Activated CD4-positive, alpha-beta memory T cell treated with anti-CD3 and anti-CD28 coated beads for 36 hours (primary cell): ENCODE measurements at regions of chr14 and their contacts with region 1.

Region 1: DNA sequence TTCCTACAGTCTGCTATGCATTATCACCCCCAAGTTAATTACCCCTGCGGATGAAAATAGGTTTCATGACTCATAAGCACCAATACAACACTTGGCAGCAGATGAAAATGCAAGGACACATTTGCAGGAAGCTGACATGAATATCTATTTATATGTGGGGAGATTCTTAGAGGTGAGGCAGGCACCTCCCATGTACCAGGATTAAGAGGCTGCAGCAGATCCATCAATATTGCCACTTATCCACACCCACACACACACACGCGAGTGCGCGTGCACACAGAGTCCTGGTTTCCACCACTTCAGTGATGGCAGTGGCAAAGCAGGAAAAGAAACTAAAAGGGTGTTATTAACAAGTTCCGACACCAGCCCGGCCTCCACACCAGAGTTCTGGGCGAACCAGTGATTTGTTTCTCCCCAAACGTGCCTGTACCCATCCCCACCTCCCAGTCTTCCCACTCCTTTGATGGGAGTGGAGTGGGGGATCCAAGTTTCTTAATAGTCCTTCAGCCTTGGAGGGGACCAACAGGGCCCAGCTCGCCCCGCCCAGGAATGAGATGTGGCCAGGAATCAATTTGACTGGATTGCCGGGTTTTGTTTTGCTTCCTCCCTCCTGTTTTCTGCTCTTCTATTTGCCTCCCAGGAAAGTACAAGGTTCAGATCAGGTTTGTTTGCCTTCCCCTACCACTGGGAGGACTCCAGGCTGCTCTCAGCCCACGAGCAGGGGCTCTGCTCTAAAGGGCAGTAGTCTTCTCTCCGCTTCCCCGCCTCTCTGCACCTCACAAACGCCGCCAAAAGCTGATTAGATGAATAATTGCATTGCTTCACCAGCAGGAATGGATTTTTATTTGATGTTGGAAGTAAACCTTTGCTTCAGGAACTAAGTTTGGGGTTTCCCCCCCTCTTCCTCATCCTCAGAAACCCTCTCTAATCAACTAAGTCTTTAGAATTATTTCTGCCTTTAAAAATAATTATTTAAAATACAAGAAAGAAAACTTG is 5.2 kb downstream of the IRF2BPL start:
- DNase-seq: peak; percentile 79
- H3K4me3 Mint-ChIP-seq: peak overlapping the region; percentile 58
- H3K27ac Mint-ChIP-seq: peak overlapping the region; percentile 87
- H3K4me1 Mint-ChIP-seq: peaks cover 44% of the 10 kb centered on the region
- H3K27me3 Mint-ChIP-seq: no peaks in the 10 kb centered on the region

Region 2: GRCh38 chr14:76947078-76947837 is 76.0 kb before region 1 on chr14:
- CTCF ChIA-PET with region 1: interaction called, 13 read pairs
- POLR2A ChIA-PET with region 1: interaction called, 4 read pairs
- intact Hi-C with region 1: no loop called
- DNase-seq: peak; percentile 91
- H3K4me3 Mint-ChIP-seq: peak overlapping the region; percentile 29
- H3K27ac Mint-ChIP-seq: peak overlapping the region; percentile 23
- H3K4me1 Mint-ChIP-seq: peaks cover 43% of the 10 kb centered on the region
- H3K27me3 Mint-ChIP-seq: no peaks in the 10 kb centered on the region

Region 3: DNA sequence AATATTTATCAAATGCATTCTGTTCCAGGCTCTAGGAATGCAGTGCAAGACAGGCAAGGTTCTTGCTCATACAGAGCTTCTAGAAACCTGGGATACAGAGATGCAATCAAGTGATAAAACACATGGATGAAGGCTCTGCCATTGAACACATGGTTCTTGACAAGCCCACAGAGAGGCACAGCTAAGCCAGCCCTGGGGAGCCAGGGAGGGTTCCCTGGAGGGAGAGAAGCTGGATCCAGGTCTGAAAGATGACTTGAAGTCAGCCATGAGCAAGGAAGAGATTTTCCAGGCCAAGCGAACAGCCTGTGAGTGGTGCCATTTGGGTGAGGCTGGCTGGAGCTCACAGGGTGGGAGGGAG is 61.0 kb before region 1 on chr14:
- CTCF ChIA-PET with region 1: interaction called, 18 read pairs
- POLR2A ChIA-PET with region 1: interaction called, 24 read pairs
- intact Hi-C with region 1: loop called (anchors 1 kb)
- DNase-seq: no peak
- H3K4me3 Mint-ChIP-seq: peak overlapping the region; percentile 77
- H3K27ac Mint-ChIP-seq: peak overlapping the region; percentile 98
- H3K4me1 Mint-ChIP-seq: peaks cover 82% of the 10 kb centered on the region
- H3K27me3 Mint-ChIP-seq: peaks cover 3% of the 10 kb centered on the region

Region 4: GRCh38 chr14:76977793-76978720 is 45.2 kb before region 1 on chr14:
- CTCF ChIA-PET with region 1: interaction called, 4 read pairs
- POLR2A ChIA-PET with region 1: no interaction called
- intact Hi-C with region 1: loop called (anchors 1 kb)
- DNase-seq: peak; percentile 94
- H3K4me3 Mint-ChIP-seq: peak overlapping the region; percentile 46
- H3K27ac Mint-ChIP-seq: peak overlapping the region; percentile 84
- H3K4me1 Mint-ChIP-seq: peaks cover 15% of the 10 kb centered on the region
- H3K27me3 Mint-ChIP-seq: no peaks in the 10 kb centered on the region

Region 5: GRCh38 chr14:77033622-77034521 is 10.6 kb after region 1 on chr14:
- CTCF ChIA-PET with region 1: interaction called, 3 read pairs
- POLR2A ChIA-PET with region 1: interaction called, 6 read pairs
- intact Hi-C with region 1: loop called (anchors 1 kb)
- DNase-seq: peak; percentile 95
- H3K4me3 Mint-ChIP-seq: peak overlapping the region; percentile 94
- H3K27ac Mint-ChIP-seq: peak overlapping the region; percentile 98
- H3K4me1 Mint-ChIP-seq: peaks cover 72% of the 10 kb centered on the region
- H3K27me3 Mint-ChIP-seq: no peaks in the 10 kb centered on the region

Region 6: DNA sequence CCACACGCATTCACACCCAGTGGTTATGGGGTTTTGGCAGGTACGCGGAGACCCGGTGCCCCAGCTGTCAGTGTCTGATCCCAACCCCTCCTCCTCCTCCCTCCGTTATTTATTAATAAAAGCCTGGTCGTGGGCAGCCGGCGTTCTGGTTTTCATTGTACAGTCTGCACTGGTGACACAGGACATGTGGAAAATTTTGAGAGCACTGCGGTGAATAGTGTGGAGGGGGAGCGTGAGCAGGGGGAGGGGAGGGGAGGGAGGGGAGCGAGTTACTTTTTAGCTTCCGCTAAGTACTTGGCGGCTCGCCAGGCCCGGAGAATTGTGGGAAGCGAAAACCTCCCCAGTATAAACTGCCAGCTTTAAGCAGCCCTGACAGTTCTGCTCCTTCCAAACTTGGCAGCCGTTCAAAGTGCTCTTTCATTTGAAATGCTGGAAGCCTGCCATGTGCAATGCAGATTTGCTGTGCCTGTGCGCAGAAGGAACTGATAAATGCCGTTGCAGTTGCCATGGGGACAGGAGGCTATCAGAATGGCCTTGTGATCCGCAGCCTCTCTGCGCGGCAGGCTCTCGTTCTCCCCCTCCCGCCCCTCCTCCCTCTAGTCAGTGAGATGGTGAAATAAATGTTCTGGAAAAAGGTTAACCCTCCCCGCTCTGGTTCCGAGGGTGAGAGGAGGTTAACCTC is 16.9 kb after region 1 on chr14:
- CTCF ChIA-PET with region 1: interaction called, 16 read pairs
- POLR2A ChIA-PET with region 1: interaction called, 23 read pairs
- intact Hi-C with region 1: loop called (anchors 1 kb)
- DNase-seq: peak; percentile 97
- H3K4me3 Mint-ChIP-seq: peak overlapping the region; percentile 77
- H3K27ac Mint-ChIP-seq: peak overlapping the region; percentile 99
- H3K4me1 Mint-ChIP-seq: peaks cover 88% of the 10 kb centered on the region
- H3K27me3 Mint-ChIP-seq: no peaks in the 10 kb centered on the region

Region 7: DNA sequence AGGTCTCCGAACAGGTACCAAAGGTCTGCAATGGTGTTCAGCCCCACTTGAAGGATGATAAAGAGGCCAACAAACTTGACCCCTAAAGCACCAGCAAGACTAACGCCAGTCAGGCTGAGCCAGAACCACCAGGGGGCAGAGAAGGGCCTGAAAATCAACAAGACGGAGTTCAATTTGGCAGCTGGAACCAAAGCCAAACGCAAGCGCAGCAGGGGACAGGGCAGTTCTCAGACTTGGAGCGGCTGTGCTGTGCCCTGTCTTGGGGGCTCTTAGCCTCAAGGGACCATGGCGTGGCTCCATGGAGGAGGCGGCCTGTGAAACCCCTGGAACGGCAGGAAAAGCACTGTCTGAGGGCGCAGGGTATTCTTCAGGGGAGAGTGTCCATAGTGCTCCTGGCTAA is 277.8 kb after region 1 on chr14:
- CTCF ChIA-PET with region 1: no interaction called
- POLR2A ChIA-PET with region 1: no interaction called
- intact Hi-C with region 1: loop called (anchors 2 kb)
- DNase-seq: peak; percentile 78
- H3K4me3 Mint-ChIP-seq: no peak overlapping the region
- H3K27ac Mint-ChIP-seq: no peak overlapping the region
- H3K4me1 Mint-ChIP-seq: peaks cover 24% of the 10 kb centered on the region
- H3K27me3 Mint-ChIP-seq: no peaks in the 10 kb centered on the region